ENCODE measurements at regions of chr5 and their contacts with region 1.

Region 1: GRCh38 chr5:132692632-132692967 is 18.8 kb downstream of the IL4 start:
- DNase-seq: no peak
- H3K4me3 ChIP-seq: no peak overlapping the region
- H3K27ac ChIP-seq: no peak overlapping the region
- H3K4me1 ChIP-seq: no peaks in the 10 kb centered on the region
- H3K27me3 ChIP-seq: no peaks in the 10 kb centered on the region
- CTCF ChIP-seq: no peak

Region 2: GRCh38 chr5:132180134-132180745 is 512.4 kb before region 1 on chr5:
- CTCF ChIA-PET with region 1: no interaction called
- POLR2A ChIA-PET with region 1: no interaction called
- intact Hi-C with region 1: loop called (anchors 5 kb)
- DNase-seq: peak; percentile 43 to 46
- H3K4me3 ChIP-seq: no peak overlapping the region
- H3K27ac ChIP-seq: no peak overlapping the region
- H3K4me1 ChIP-seq: no peaks in the 10 kb centered on the region
- H3K27me3 ChIP-seq: no peaks in the 10 kb centered on the region
- CTCF ChIP-seq: peak; percentile 82

Region 3: GRCh38 chr5:132466433-132467286 is 225.9 kb before region 1 on chr5:
- CTCF ChIA-PET with region 1: no interaction called
- POLR2A ChIA-PET with region 1: no interaction called
- intact Hi-C with region 1: no loop called
- DNase-seq: peak in 1 of 2 experiments; percentile 59
- H3K4me3 ChIP-seq: no peak overlapping the region
- H3K27ac ChIP-seq: no peak overlapping the region
- H3K4me1 ChIP-seq: peaks cover 29% of the 10 kb centered on the region
- H3K27me3 ChIP-seq: no peaks in the 10 kb centered on the region
- CTCF ChIP-seq: no peak

Region 4: DNA sequence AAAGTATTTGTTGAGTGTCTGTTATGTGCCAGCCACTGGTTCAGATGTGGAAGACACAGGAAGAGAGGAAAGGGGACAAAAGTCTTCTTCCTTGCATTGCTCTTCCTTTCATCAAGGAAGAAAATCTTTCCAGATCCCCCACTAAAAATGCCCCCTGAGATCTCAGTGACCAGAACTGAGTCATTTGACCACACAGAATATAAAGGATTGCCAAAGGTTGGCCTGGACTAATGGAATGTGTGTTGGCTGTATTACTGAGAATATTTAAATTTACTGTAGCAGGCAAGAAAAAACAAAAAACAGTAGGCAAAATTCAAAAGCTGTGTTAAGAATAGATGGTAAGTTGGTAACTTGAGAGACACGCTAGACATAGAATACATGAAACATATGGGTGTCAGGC is 94.5 kb after region 1 on chr5:
- CTCF ChIA-PET with region 1: no interaction called
- POLR2A ChIA-PET with region 1: no interaction called
- intact Hi-C with region 1: no loop called
- DNase-seq: no peak
- H3K4me3 ChIP-seq: no peak overlapping the region
- H3K27ac ChIP-seq: no peak overlapping the region
- H3K4me1 ChIP-seq: no peaks in the 10 kb centered on the region; the same call in 1 of the 2 replicates
- H3K27me3 ChIP-seq: no peaks in the 10 kb centered on the region
- CTCF ChIP-seq: no peak

Region 5: DNA sequence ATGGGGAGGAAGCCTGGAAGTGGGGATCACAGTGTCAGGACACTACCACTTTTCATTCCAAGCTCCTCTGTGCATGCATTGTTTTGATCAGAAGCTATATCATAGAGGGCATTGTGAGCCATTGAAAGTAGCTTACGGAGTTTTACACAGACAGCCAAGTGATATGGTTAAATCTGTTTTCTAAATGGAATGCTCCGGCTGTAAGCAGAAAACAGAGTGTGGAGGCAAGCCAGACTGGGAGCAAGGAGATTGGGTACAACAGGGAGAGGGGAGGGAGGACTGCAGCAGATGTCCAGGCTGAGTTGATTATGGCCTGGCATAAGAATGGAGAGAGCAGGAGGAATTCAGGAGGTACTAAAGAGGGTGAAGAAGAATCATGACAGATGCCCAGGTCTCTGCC is 105.1 kb after region 1 on chr5:
- CTCF ChIA-PET with region 1: no interaction called
- POLR2A ChIA-PET with region 1: no interaction called
- intact Hi-C with region 1: no loop called
- DNase-seq: no peak
- H3K4me3 ChIP-seq: no peak overlapping the region
- H3K27ac ChIP-seq: no peak overlapping the region
- H3K4me1 ChIP-seq: no peaks in the 10 kb centered on the region
- H3K27me3 ChIP-seq: no peaks in the 10 kb centered on the region
- CTCF ChIP-seq: no peak

Measured in PC-9 (cell line).